Naive thymus-derived CD4-positive, alpha-beta T cell (primary cell): ENCODE measurements at regions of chrX and their contacts with region 1.

Region 1: GRCh38 chrX:155026726-155027508 is at the start of gene FUNDC2:
- DNase-seq: peak; percentile 78 to 96 (median 93)
- ATAC-seq: peak; percentile 92
- H3K4me3 ChIP-seq: peak within 1 kb of the TSS; percentile 90
- H3K4me3 Mint-ChIP-seq: peak within 1 kb of the TSS; percentile 82 to 92 (median 90)
- H3K27ac ChIP-seq: peak within 1 kb of the TSS; percentile 94
- H3K27ac Mint-ChIP-seq: peak within 1 kb of the TSS; percentile 84 to 97 (median 93)
- H3K4me1 ChIP-seq: peaks cover 4 to 12% of the 10 kb centered on the region in 2 donors
- H3K4me1 Mint-ChIP-seq: peaks cover 5 to 31% (median 27%) of the 10 kb centered on the region in 7 donors
- H3K27me3 ChIP-seq: no peaks in the 10 kb centered on the region
- H3K27me3 Mint-ChIP-seq: peaks cover 0 to 19% (median 0%) of the 10 kb centered on the region in 5 donors
- total RNA-seq, gene FUNDC2: 42.0 to 58.7 (median 50.1) TPM

Region 2: GRCh38 chrX:154397819-154398724 is 628.8 kb before region 1 on chrX and contains the start of gene RPL10:
- CTCF ChIA-PET with region 1: no interaction called
- POLR2A ChIA-PET with region 1: no interaction called
- intact Hi-C with region 1: loop called in 1 of 2 experiments (anchors 10 kb)
- DNase-seq: peak; percentile 67 to 90 (median 86)
- ATAC-seq: peak; percentile 90
- H3K4me3 ChIP-seq: peak within 1 kb of the TSS; percentile 95
- H3K4me3 Mint-ChIP-seq: peak within 1 kb of the TSS; percentile 93 to 100 (median 98)
- H3K27ac ChIP-seq: peak within 1 kb of the TSS; percentile 97
- H3K27ac Mint-ChIP-seq: peak within 1 kb of the TSS; percentile 97 to 100 (median 99)
- H3K4me1 ChIP-seq: peaks cover 10 to 14% of the 10 kb centered on the region in 2 donors
- H3K4me1 Mint-ChIP-seq: peaks cover 6 to 22% (median 14%) of the 10 kb centered on the region in 7 donors
- H3K27me3 ChIP-seq: no peaks in the 10 kb centered on the region
- H3K27me3 Mint-ChIP-seq: peaks cover 0 to 5% (median 0%) of the 10 kb centered on the region in 5 donors
- total RNA-seq, gene RPL10: 2,926 to 5,130 (median 5,063) TPM

Region 3: GRCh38 chrX:154980330-154981096 is 46.4 kb before region 1 on chrX:
- CTCF ChIA-PET with region 1: no interaction called
- POLR2A ChIA-PET with region 1: interaction called, 3 read pairs
- intact Hi-C with region 1: loop called (anchors 2 kb)
- DNase-seq: peak; percentile 48 to 82 (median 74)
- ATAC-seq: peak; percentile 98
- H3K4me3 ChIP-seq: peak overlapping the region; percentile 65
- H3K4me3 Mint-ChIP-seq: peak overlapping the region; percentile 53 to 93 (median 82)
- H3K27ac ChIP-seq: peak overlapping the region; percentile 54
- H3K27ac Mint-ChIP-seq: peak overlapping the region; percentile 73 to 96 (median 88)
- H3K4me1 ChIP-seq: peaks cover 0 to 5% of the 10 kb centered on the region in 2 donors
- H3K4me1 Mint-ChIP-seq: peaks cover 0 to 16% (median 7%) of the 10 kb centered on the region in 7 donors
- H3K27me3 ChIP-seq: no peaks in the 10 kb centered on the region
- H3K27me3 Mint-ChIP-seq: no peaks in the 10 kb centered on the region

Region 4: GRCh38 chrX:155001873-155002272 is 25.0 kb before region 1 on chrX:
- CTCF ChIA-PET with region 1: no interaction called
- POLR2A ChIA-PET with region 1: no interaction called
- intact Hi-C with region 1: no loop called
- DNase-seq: no peak
- ATAC-seq: no peak
- H3K4me3 ChIP-seq: no peak overlapping the region
- H3K4me3 Mint-ChIP-seq: no peak overlapping the region
- H3K27ac ChIP-seq: no peak overlapping the region
- H3K27ac Mint-ChIP-seq: no peak overlapping the region
- H3K4me1 ChIP-seq: no peaks in the 10 kb centered on the region
- H3K4me1 Mint-ChIP-seq: no peaks in the 10 kb centered on the region
- H3K27me3 ChIP-seq: no peaks in the 10 kb centered on the region
- H3K27me3 Mint-ChIP-seq: peaks cover 0 to 7% (median 0%) of the 10 kb centered on the region in 5 donors

Region 5: DNA sequence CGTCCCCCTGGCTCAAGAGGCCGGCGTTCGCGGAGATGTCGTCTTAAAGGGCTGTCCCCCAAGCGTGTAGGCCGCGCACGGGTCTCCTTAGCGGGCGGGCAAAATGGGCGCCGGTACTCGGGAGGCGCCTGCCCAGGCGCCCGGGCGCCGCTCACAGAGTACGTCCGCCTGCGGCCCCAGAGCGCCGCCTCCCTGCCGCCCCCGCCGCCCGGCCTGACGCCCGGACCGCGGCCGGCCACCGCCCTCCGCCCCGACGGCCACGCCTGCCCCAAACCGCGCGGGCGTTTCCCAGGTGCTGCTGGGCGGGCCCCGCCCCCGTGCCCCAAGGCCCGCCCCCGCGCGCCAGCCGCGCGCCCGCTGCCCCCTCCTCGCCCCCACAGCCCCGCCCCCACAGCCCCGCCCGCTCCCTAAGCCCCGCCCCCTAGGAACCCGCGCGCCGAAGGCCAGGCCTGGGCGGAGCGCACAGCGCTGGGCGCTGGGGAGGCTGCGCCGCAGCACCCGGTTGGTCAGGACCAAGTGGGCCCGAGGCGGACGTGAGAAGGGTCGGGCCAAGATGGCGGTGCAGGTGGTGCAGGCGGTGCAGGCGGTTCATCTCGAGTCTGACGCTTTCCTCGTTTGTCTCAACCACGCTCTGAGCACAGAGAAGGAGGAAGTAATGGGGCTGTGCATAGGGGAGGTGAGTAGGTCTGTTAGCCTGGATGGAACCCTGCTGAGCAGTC is 44.2 kb after region 1 on chrX and contains the starts of genes BRCC3, CMC4 and MTCP1:
- CTCF ChIA-PET with region 1: no interaction called
- POLR2A ChIA-PET with region 1: interaction called, 4 read pairs
- intact Hi-C with region 1: loop called (anchors 1 kb)
- DNase-seq: peak; percentile 62 to 77 (median 74)
- ATAC-seq: peak; percentile 90
- H3K4me3 ChIP-seq: peak within 1 kb of the TSS; percentile 76
- H3K4me3 Mint-ChIP-seq: peak within 1 kb of the TSS; percentile 81 to 94 (median 89)
- H3K27ac ChIP-seq: peak within 1 kb of the TSS; percentile 82
- H3K27ac Mint-ChIP-seq: peak within 1 kb of the TSS; percentile 83 to 96 (median 94)
- H3K4me1 ChIP-seq: peaks cover 6 to 12% of the 10 kb centered on the region in 2 donors
- H3K4me1 Mint-ChIP-seq: peaks cover 30 to 62% (median 54%) of the 10 kb centered on the region in 7 donors
- H3K27me3 ChIP-seq: no peaks in the 10 kb centered on the region
- H3K27me3 Mint-ChIP-seq: no peaks in the 10 kb centered on the region
- total RNA-seq, gene BRCC3: 11.5 to 27.8 (median 15.2) TPM
- total RNA-seq, gene CMC4: 3.1 to 6.0 (median 5.1) TPM
- total RNA-seq, gene MTCP1: 10.3 to 21.5 (median 17.1) TPM

Region 6: GRCh38 chrX:155263854-155264628 is 237.1 kb after region 1 on chrX and contains the start of gene RAB39B:
- CTCF ChIA-PET with region 1: no interaction called
- POLR2A ChIA-PET with region 1: no interaction called
- intact Hi-C with region 1: loop called in 1 of 2 experiments (anchors 2 kb)
- DNase-seq: peak; percentile 24 to 78 (median 62)
- ATAC-seq: peak; percentile 95
- H3K4me3 ChIP-seq: peak within 1 kb of the TSS; percentile 76
- H3K4me3 Mint-ChIP-seq: peak within 1 kb of the TSS; percentile 72 to 91 (median 78)
- H3K27ac ChIP-seq: peak within 1 kb of the TSS; percentile 93
- H3K27ac Mint-ChIP-seq: peak within 1 kb of the TSS; percentile 42 to 92 (median 85)
- H3K4me1 ChIP-seq: peaks cover 5 to 6% of the 10 kb centered on the region in 2 donors
- H3K4me1 Mint-ChIP-seq: peaks cover 3 to 38% (median 27%) of the 10 kb centered on the region in 7 donors
- H3K27me3 ChIP-seq: no peaks in the 10 kb centered on the region
- H3K27me3 Mint-ChIP-seq: no peaks in the 10 kb centered on the region
- total RNA-seq, gene RAB39B: 3.9 to 13.3 (median 10.3) TPM

Region 7: DNA sequence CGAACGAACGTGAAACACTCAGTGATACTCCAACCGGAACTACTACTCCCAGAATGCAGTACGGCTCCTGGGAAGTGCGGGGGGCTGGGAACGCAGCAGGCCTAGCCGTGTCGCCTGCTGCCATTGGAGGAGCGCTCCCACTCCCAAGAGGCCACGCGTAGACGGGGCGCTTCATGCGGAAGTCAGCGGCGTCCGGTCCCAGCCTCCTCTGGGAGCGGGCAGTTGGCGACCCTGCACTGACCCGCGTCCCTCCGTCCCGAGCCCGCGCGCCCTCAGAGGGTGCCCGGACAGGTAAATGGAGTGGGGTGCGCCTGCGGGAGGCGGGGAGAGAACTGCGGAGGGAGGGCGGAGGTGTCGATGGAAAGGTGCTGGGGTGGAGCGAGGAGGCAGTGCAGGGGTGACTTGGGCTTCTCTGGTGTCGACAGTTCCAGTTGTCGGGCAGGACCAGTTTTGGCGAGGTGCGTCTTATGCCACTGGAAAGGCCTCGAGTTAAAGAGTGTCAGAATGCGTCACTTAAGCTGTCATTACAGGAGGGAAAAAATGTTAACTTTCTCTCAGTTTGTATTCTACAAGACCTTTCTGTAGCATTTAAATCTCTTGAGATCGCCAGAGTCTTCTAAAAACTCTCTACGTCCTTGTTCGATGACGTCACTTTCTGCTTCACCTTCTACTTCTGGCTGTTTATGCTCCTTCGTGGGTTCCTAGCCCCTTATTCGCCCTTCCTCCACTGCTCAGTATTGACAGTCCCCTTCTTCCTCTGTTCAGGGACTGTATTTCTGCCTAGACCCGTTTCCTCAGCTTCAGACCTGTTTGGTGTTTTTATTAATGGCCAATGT is 854.5 kb after region 1 on chrX and contains the start of gene VAMP7:
- CTCF ChIA-PET with region 1: no interaction called
- POLR2A ChIA-PET with region 1: no interaction called
- intact Hi-C with region 1: loop called in 1 of 2 experiments (anchors 2 kb)
- DNase-seq: peak; percentile 47 to 82 (median 71)
- ATAC-seq: peak; percentile 99
- H3K4me3 ChIP-seq: peak within 1 kb of the TSS; percentile 55
- H3K4me3 Mint-ChIP-seq: peak within 1 kb of the TSS; percentile 86 to 97 (median 92)
- H3K27ac ChIP-seq: peak within 1 kb of the TSS; percentile 78
- H3K27ac Mint-ChIP-seq: peak within 1 kb of the TSS; percentile 63 to 98 (median 92)
- H3K4me1 ChIP-seq: peaks cover 0 to 5% of the 10 kb centered on the region in 2 donors
- H3K4me1 Mint-ChIP-seq: peaks cover 19 to 40% (median 34%) of the 10 kb centered on the region in 7 donors
- H3K27me3 ChIP-seq: no peaks in the 10 kb centered on the region
- H3K27me3 Mint-ChIP-seq: peaks cover 0 to 6% (median 4%) of the 10 kb centered on the region in 5 donors
- total RNA-seq, gene VAMP7: 18.5 to 32.5 (median 21.0) TPM